ENCODE measurements at regions of chr10 and their contacts with region 1.

Region 1: GRCh38 chr10:62019013-62019684 is 117.7 kb downstream of the ARID5B start:
- DNase-seq: no peak
- H3K4me3 Mint-ChIP-seq: no peak overlapping the region
- H3K27ac Mint-ChIP-seq: peak overlapping the region; percentile 96
- H3K4me1 Mint-ChIP-seq: peaks cover 85% of the 10 kb centered on the region
- H3K27me3 Mint-ChIP-seq: no peaks in the 10 kb centered on the region

Region 2: GRCh38 chr10:61896854-61897661 is 122.1 kb before region 1 on chr10:
- CTCF ChIA-PET with region 1: interaction called, 10 read pairs
- POLR2A ChIA-PET with region 1: interaction called, 15 read pairs
- intact Hi-C with region 1: loop called (anchors 1 kb)
- DNase-seq: peak; percentile 70
- H3K4me3 Mint-ChIP-seq: peak overlapping the region; percentile 66
- H3K27ac Mint-ChIP-seq: peak overlapping the region; percentile 95
- H3K4me1 Mint-ChIP-seq: peaks cover 43% of the 10 kb centered on the region
- H3K27me3 Mint-ChIP-seq: no peaks in the 10 kb centered on the region

Region 3: DNA sequence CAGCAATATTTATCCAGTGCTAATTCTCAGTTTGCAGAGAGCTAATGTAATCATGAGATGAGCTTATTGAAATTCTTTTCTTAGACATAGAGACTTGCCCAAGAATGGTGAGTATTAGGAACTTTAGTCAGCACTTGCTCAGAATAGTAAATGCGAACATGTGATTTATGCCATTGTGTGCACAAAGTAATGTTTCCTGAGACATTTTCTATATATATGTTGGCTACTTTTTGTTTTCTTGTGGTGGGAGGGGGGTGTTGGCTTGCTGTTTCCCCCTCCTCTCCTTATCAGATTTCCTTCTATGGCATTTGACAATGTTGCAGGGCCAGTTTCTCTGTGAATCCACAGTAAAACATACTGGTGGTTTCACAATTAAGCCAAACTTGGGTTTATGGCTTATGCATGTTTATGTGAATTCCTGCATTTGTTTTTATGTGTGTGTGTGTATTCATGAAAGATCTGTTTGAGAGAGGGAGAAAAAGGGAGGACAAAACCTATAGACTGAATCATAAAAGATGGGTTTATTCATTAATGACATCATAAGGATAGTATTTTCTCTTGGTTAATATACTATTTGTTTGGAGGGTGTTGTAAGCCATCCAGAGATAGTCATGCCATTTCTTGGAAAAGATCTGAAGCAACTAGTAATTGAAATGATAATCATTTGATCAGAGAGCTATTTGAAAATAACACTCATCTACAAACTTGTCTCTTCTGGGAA is 81.4 kb before region 1 on chr10:
- CTCF ChIA-PET with region 1: interaction called, 3 read pairs
- POLR2A ChIA-PET with region 1: interaction called, 16 read pairs
- intact Hi-C with region 1: no loop called
- DNase-seq: peak; percentile 30
- H3K4me3 Mint-ChIP-seq: peak overlapping the region; percentile 74
- H3K27ac Mint-ChIP-seq: peak overlapping the region; percentile 92
- H3K4me1 Mint-ChIP-seq: peaks cover 88% of the 10 kb centered on the region
- H3K27me3 Mint-ChIP-seq: no peaks in the 10 kb centered on the region

Region 4: GRCh38 chr10:61961278-61961677 is 57.9 kb before region 1 on chr10:
- CTCF ChIA-PET with region 1: no interaction called
- POLR2A ChIA-PET with region 1: interaction called, 4 read pairs
- intact Hi-C with region 1: loop called (anchors 1 kb)
- DNase-seq: peak; percentile 49
- H3K4me3 Mint-ChIP-seq: peak overlapping the region; percentile 24
- H3K27ac Mint-ChIP-seq: peak overlapping the region; percentile 76
- H3K4me1 Mint-ChIP-seq: peaks cover 87% of the 10 kb centered on the region
- H3K27me3 Mint-ChIP-seq: no peaks in the 10 kb centered on the region

Region 5: DNA sequence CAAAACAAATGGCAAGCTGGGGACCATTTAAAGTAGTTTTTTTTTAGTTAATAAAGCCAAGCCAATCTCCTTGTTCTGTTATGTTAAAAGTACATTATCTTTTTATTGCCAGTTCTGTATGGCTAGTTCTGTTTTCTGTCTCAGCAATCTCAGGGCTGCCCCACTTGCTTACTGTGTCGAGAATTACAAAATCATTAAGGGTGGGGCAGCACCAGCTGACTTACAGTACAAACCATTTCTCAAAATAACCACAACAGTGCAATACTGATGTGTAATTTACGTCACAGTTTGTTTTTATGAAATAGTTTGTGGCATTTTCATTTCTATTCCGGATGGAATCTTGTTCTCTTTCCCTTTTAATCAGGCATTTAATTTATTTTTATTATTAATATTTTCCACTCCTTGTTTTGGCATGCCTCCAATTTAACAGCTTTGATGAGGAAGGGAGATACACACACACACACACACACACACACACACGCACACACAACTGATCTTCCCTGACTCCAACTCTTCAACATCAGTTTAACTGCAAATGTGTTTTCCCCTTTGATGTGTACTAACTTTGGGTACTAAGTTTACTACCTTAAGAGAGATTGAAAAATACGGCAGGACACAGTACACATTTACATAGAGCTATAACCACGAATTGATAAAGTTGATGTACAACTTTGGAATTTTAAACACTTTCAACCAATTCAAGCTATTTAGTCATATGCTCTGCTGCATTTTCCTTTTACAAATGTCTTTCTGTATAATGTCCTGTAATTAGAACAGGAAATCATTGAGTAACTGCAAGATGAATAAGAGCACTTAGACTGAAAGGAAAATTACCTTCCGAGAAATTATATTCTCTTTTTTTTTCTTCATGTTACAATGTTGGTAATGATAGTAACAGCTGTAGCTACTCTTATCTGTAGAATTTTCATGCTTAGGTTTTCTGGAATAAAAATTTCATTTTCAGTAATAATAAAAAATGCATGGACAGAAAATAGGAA is 26.2 kb before region 1 on chr10:
- CTCF ChIA-PET with region 1: interaction called, 6 read pairs
- POLR2A ChIA-PET with region 1: interaction called, 52 read pairs
- intact Hi-C with region 1: loop called (anchors 1 kb)
- DNase-seq: peak; percentile 75
- H3K4me3 Mint-ChIP-seq: peak overlapping the region; percentile 57
- H3K27ac Mint-ChIP-seq: peak overlapping the region; percentile 99
- H3K4me1 Mint-ChIP-seq: peaks cover 85% of the 10 kb centered on the region
- H3K27me3 Mint-ChIP-seq: no peaks in the 10 kb centered on the region

Region 6: GRCh38 chr10:62038609-62039190 is 19.6 kb after region 1 on chr10:
- CTCF ChIA-PET with region 1: interaction called, 80 read pairs
- POLR2A ChIA-PET with region 1: interaction called, 163 read pairs
- intact Hi-C with region 1: no loop called
- DNase-seq: peak; percentile 85
- H3K4me3 Mint-ChIP-seq: peak overlapping the region; percentile 47
- H3K27ac Mint-ChIP-seq: peak overlapping the region; percentile 84
- H3K4me1 Mint-ChIP-seq: peaks cover 81% of the 10 kb centered on the region
- H3K27me3 Mint-ChIP-seq: no peaks in the 10 kb centered on the region

Measured in activated CD4-positive, alpha-beta memory T cell treated with anti-CD3 and anti-CD28 coated beads for 36 hours (primary cell).